ENCODE measurements at regions of chr6 and their contacts with region 1.

Region 1: DNA sequence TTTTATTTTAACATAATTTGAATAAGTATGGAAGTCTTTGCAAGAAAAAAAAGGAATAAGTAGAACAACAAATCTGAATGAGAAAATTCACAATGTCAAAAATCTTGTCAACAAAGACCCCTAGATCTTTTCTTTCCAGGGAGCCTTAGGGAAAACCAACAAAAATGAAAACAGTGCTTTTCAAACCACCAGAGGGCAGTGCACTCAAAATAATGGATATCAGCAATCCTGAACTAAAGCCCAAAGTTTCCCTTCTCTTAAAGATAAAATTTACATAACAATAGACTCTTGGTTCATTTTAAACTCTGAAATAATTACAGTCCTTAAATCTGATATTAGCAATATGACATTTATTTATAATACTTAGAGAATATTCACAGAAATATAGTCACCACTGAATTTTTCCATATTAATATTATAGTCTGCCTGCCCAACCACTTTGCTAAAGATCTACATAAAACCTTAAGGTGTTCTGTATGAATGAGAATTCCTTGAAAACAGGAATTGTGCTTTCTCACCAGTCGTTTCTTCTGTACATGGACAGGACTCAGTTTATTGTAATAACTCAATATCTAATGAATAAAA is 105.3 kb upstream of the BMP5 start:
- DNase-seq: peak; percentile 46
- H3K4me3 Mint-ChIP-seq: no peak overlapping the region
- H3K27ac Mint-ChIP-seq: no peak overlapping the region
- H3K4me1 Mint-ChIP-seq: no peaks in the 10 kb centered on the region
- H3K27me3 Mint-ChIP-seq: no peaks in the 10 kb centered on the region
- CTCF ChIP-seq: peak; percentile 59

Region 2: GRCh38 chr6:55941702-55942101 is 39.0 kb before region 1 on chr6:
- CTCF ChIA-PET with region 1: no interaction called
- intact Hi-C with region 1: no loop called
- DNase-seq: no peak
- H3K4me3 Mint-ChIP-seq: no peak overlapping the region
- H3K27ac Mint-ChIP-seq: no peak overlapping the region
- H3K4me1 Mint-ChIP-seq: no peaks in the 10 kb centered on the region
- H3K27me3 Mint-ChIP-seq: no peaks in the 10 kb centered on the region
- CTCF ChIP-seq: peak; percentile 25

Region 3: DNA sequence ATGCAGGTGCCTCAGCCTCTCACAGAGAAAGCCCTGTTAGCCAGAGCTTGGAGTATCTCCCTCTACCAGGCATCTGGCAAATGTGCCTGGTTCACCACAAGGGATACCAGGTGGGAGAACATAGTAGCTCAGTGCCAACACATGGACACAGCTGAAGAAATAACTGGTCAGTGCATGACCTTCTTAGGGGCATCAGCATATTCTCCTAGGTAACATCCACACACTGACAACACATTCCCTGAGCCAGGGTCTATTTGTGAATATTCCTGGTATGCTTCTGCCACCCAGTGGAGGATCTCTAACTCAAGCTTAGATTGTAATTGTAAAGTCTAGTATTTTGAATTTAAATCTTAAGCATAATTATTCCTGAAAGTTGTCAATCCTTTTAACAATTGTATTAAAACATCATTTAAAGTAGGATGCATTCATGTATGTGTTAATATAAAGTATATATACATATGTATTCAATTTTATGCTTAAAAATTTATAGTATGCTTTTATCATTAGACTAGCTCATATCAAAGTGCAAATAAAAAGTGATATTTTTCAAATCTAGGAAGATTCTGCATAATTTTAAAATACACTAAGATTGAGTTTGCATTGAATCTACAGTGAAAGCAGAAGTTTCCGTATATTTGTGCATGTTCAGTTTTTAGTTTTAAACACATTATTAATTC is 311.9 kb after region 1 on chr6:
- CTCF ChIA-PET with region 1: interaction called, 7 read pairs
- intact Hi-C with region 1: loop called (anchors 1 kb)
- DNase-seq: peak; percentile 49
- H3K4me3 Mint-ChIP-seq: no peak overlapping the region
- H3K27ac Mint-ChIP-seq: no peak overlapping the region
- H3K4me1 Mint-ChIP-seq: peaks cover 19% of the 10 kb centered on the region
- H3K27me3 Mint-ChIP-seq: no peaks in the 10 kb centered on the region
- CTCF ChIP-seq: peak; percentile 64

Measured in Calu3 (cell line).